ENCODE measurements at regions of chr7 and their contacts with region 1.

Region 1: DNA sequence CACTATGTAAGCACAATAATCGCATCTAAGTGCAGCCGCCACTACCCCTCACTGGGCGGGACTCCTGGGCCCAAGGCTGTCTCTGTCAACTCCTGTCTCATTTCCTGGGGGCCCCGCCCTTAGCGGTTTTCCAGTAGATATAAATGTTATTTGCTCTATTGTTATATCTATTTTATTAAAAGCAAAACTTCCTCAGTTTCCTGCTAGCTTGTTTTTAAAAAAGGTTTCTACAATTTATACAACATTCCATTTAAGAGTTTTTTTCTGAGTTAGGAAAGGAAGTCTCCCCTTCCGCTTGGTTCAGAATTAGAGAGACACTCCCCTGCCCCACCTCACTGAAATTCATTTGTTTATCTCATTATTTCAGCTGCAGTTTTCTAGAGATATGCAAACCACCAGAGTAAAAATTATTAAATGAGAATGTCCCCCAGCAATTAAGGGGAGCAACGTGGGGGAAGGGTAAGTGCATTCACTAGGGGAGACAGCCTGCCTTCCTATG is 82.7 kb downstream of the RAMP3 start:
- DNase-seq: no peak
- H3K4me3 ChIP-seq: no peak overlapping the region
- H3K27ac ChIP-seq: no peak overlapping the region
- H3K4me1 ChIP-seq: no peaks in the 10 kb centered on the region
- H3K27me3 ChIP-seq: peaks cover 60% of the 10 kb centered on the region
- CTCF ChIP-seq: no peak

Region 2: GRCh38 chr7:45292481-45292880 is 52.2 kb after region 1 on chr7:
- CTCF ChIA-PET with region 1: no interaction called
- POLR2A ChIA-PET with region 1: no interaction called
- intact Hi-C with region 1: loop called (anchors 5 kb)
- DNase-seq: no peak
- H3K4me3 ChIP-seq: no peak overlapping the region
- H3K27ac ChIP-seq: no peak overlapping the region
- H3K4me1 ChIP-seq: peaks cover 10% of the 10 kb centered on the region
- H3K27me3 ChIP-seq: no peaks in the 10 kb centered on the region
- CTCF ChIP-seq: no peak